Motor neuron (in vitro differentiated cells): ENCODE measurements at regions of chr5 and their contacts with region 1.

Region 1: GRCh38 chr5:34452170-34452830 is 203.8 kb upstream of the RAI14 start:
- ATAC-seq: peak in 3 of 8 experiments; percentile 40 to 63 (median 50)
- H3K4me3 ChIP-seq: no peak overlapping the region
- H3K27ac ChIP-seq: no peak overlapping the region
- H3K4me1 ChIP-seq: no peaks in the 10 kb centered on the region

Region 2: GRCh38 chr5:33409435-33410170 is 1042.7 kb before region 1 on chr5:
- in situ Hi-C with region 1: no loop called
- ATAC-seq: no peak
- H3K4me3 ChIP-seq: no peak overlapping the region
- H3K27ac ChIP-seq: no peak overlapping the region
- H3K4me1 ChIP-seq: no peaks in the 10 kb centered on the region

Region 3: GRCh38 chr5:34007621-34008600 is 444.4 kb before region 1 on chr5 and contains the start of gene AMACR:
- in situ Hi-C with region 1: loop called in 1 of 9 experiments (anchors 10 kb)
- ATAC-seq: peak; percentile 86 to 96 (median 95)
- H3K4me3 ChIP-seq: peak within 1 kb of the TSS; percentile 55 to 89 (median 80)
- H3K27ac ChIP-seq: peak within 1 kb of the TSS; percentile 90 to 92
- H3K4me1 ChIP-seq: peaks cover 13 to 14% of the 10 kb centered on the region in 2 donors
- total RNA-seq, gene AMACR: 4.2 to 17.7 (median 8.7) TPM